Caco-2 (cell line): ENCODE measurements at regions of chr11 and their contacts with region 1.

Region 1: GRCh38 chr11:99973993-99974392 is 713.1 kb upstream of the ARHGAP42 start:
- DNase-seq: peak; percentile 44 to 69
- H3K4me3 ChIP-seq: no peak overlapping the region
- H3K4me3 Mint-ChIP-seq: peak overlapping the region; percentile 29
- H3K27ac Mint-ChIP-seq: peak overlapping the region; percentile 62
- H3K4me1 ChIP-seq: peaks cover 41% of the 10 kb centered on the region
- H3K4me1 Mint-ChIP-seq: peaks cover 27% of the 10 kb centered on the region
- H3K27me3 ChIP-seq: no peaks in the 10 kb centered on the region
- H3K27me3 Mint-ChIP-seq: no peaks in the 10 kb centered on the region
- CTCF ChIP-seq: no peak

Region 2: DNA sequence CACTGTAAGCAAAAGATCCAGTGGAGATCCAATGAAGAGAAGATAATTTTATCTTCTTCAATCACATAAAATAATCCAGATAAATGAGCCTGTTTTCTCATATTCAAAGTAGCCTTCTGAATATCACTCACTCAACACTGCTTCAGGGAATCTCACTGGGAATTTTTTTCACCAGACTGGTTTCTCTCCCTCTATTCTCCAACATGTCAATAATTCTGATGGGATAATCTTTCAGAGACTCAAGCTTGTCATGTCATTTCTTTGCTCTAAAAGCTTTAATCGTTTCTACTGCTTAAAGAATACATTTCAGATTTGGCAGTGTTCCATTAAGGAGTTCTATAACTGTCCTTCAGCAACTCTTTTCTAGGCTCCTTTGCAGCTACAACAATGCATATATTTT is 936.9 kb before region 1 on chr11:
- CTCF ChIA-PET with region 1: no interaction called
- POLR2A ChIA-PET with region 1: no interaction called
- intact Hi-C with region 1: no loop called
- DNase-seq: no peak
- H3K4me3 ChIP-seq: no peak overlapping the region
- H3K4me3 Mint-ChIP-seq: no peak overlapping the region
- H3K27ac Mint-ChIP-seq: no peak overlapping the region
- H3K4me1 ChIP-seq: no peaks in the 10 kb centered on the region
- H3K4me1 Mint-ChIP-seq: no peaks in the 10 kb centered on the region
- H3K27me3 ChIP-seq: no peaks in the 10 kb centered on the region
- H3K27me3 Mint-ChIP-seq: no peaks in the 10 kb centered on the region
- CTCF ChIP-seq: no peak

Region 3: DNA sequence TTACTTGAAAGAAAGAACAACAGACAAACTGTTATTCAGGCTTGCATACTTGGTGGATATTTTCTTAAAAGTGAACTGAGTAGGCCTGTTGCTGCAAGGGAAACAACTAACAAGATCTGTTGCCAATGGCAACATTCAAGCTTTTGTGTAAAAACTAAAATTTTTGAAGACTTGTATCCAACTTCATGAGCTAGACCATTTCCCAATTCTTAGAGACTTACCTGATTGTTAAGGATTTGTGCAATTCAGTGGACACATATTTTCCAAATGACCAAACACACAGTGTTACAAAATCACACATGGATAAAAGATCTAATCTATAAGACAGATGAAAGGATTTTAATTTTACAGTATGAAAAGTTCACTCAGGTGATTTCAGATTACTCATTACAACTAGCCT is 389.2 kb before region 1 on chr11:
- CTCF ChIA-PET with region 1: no interaction called
- POLR2A ChIA-PET with region 1: no interaction called
- intact Hi-C with region 1: no loop called
- DNase-seq: no peak
- H3K4me3 ChIP-seq: no peak overlapping the region
- H3K4me3 Mint-ChIP-seq: no peak overlapping the region
- H3K27ac Mint-ChIP-seq: no peak overlapping the region
- H3K4me1 ChIP-seq: no peaks in the 10 kb centered on the region
- H3K4me1 Mint-ChIP-seq: peaks cover 3% of the 10 kb centered on the region
- H3K27me3 ChIP-seq: no peaks in the 10 kb centered on the region
- H3K27me3 Mint-ChIP-seq: peaks cover 2% of the 10 kb centered on the region
- CTCF ChIP-seq: no peak

Region 4: GRCh38 chr11:99916078-99916477 is 57.9 kb before region 1 on chr11:
- CTCF ChIA-PET with region 1: no interaction called
- POLR2A ChIA-PET with region 1: no interaction called
- intact Hi-C with region 1: loop called (anchors 2 kb)
- DNase-seq: peak in 1 of 2 experiments; percentile 15
- H3K4me3 ChIP-seq: no peak overlapping the region
- H3K4me3 Mint-ChIP-seq: no peak overlapping the region
- H3K27ac Mint-ChIP-seq: peak overlapping the region; percentile 17
- H3K4me1 ChIP-seq: peaks cover 14% of the 10 kb centered on the region
- H3K4me1 Mint-ChIP-seq: peaks cover 16% of the 10 kb centered on the region
- H3K27me3 ChIP-seq: no peaks in the 10 kb centered on the region
- H3K27me3 Mint-ChIP-seq: no peaks in the 10 kb centered on the region
- CTCF ChIP-seq: no peak

Region 5: GRCh38 chr11:100008417-100008816 is 34.4 kb after region 1 on chr11:
- CTCF ChIA-PET with region 1: no interaction called
- POLR2A ChIA-PET with region 1: no interaction called
- intact Hi-C with region 1: loop called (anchors 1 kb)
- DNase-seq: peak in 1 of 2 experiments; percentile 21
- H3K4me3 ChIP-seq: no peak overlapping the region
- H3K4me3 Mint-ChIP-seq: no peak overlapping the region
- H3K27ac Mint-ChIP-seq: no peak overlapping the region
- H3K4me1 ChIP-seq: peaks cover 42% of the 10 kb centered on the region
- H3K4me1 Mint-ChIP-seq: peaks cover 42% of the 10 kb centered on the region
- H3K27me3 ChIP-seq: no peaks in the 10 kb centered on the region
- H3K27me3 Mint-ChIP-seq: no peaks in the 10 kb centered on the region
- CTCF ChIP-seq: no peak

Region 6: DNA sequence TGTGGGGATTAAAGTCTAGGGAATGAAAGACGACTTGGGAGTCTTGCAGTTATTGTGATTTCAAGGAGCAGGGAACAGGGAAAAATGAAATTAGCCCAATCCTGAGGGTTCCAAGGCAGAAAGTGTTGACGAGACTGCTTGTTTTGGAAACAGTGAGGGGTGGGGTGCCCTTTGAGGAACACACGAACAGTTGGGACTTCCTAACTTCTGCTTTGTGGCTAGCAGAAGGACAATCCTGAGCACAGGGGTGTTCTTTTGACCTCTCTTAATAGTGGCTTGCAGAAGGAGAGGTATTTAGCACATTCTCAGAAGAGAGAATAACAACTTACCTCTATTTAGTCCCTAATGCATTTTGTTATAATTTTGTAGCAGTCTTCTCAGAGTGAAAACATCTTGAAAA is 167.2 kb after region 1 on chr11:
- CTCF ChIA-PET with region 1: no interaction called
- POLR2A ChIA-PET with region 1: no interaction called
- intact Hi-C with region 1: no loop called
- DNase-seq: no peak
- H3K4me3 ChIP-seq: no peak overlapping the region
- H3K4me3 Mint-ChIP-seq: no peak overlapping the region
- H3K27ac Mint-ChIP-seq: no peak overlapping the region
- H3K4me1 ChIP-seq: no peaks in the 10 kb centered on the region
- H3K4me1 Mint-ChIP-seq: no peaks in the 10 kb centered on the region
- H3K27me3 ChIP-seq: no peaks in the 10 kb centered on the region
- H3K27me3 Mint-ChIP-seq: peaks cover 3% of the 10 kb centered on the region
- CTCF ChIP-seq: no peak

Region 7: GRCh38 chr11:100403817-100404216 is 429.8 kb after region 1 on chr11:
- CTCF ChIA-PET with region 1: no interaction called
- POLR2A ChIA-PET with region 1: no interaction called
- intact Hi-C with region 1: loop called (anchors 1 kb)
- DNase-seq: peak; percentile 69 to 73
- H3K4me3 ChIP-seq: no peak overlapping the region
- H3K4me3 Mint-ChIP-seq: peak overlapping the region; percentile 39
- H3K27ac Mint-ChIP-seq: peak overlapping the region; percentile 87
- H3K4me1 ChIP-seq: peaks cover 74% of the 10 kb centered on the region
- H3K4me1 Mint-ChIP-seq: peaks cover 56% of the 10 kb centered on the region
- H3K27me3 ChIP-seq: no peaks in the 10 kb centered on the region
- H3K27me3 Mint-ChIP-seq: no peaks in the 10 kb centered on the region
- CTCF ChIP-seq: no peak